Activated CD8-positive, alpha-beta memory T cell treated with anti-CD3 and anti-CD28 coated beads, Interleukin-2, amount 10 ng/mL, durations not matched to agents 7 days and 5 days (primary cell): ENCODE measurements at regions of chr10 and their contacts with region 1.

Region 1: DNA sequence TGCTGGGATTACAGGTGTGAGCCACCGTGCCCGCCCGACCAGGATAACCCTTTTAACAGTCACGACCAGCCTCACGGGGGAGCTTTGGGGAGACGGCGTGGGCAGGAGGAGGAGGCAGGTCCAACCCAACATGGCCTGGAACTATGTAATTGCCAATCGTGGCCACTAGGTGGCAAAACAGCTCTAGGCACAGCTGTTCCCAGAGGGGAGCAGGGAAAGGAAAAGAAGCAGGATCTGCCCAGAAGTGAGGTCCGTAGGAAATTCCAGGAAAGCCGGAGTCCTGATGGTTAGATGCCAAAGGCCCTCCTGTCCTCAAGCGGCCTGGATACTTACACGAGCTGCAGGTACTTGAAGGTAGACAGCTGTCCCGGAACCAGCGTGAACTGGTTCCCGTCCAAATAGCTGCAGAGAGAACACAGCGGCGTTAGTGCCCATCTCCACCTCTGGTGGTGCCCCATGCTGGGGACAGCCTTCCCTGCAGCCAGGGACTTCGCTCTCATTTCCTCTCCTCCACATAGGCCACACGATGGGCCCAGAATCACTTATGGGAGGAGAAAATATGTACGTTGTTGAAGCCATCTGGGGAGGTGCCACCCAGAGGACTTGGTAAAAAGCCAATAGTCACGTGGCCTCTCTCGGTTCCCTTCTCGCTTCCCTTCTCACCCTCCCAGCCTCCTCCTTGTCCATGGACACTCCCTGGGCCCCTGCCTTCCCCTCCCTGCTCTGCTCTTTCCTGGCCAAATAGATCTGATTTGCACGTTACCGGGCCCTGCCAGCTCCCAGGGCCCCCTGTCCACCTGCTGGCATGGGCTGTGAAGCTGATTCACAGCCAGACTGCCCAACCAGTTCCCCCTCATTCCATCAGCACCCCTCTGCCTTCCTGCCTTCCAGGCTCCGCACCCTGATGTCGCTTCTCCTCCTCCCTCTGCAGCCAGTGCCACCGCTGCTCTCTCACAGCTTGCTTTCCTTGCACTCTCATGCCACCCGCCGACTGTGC is 148.1 kb downstream of the SLIT1 start:
- DNase-seq: peak; percentile 79
- ATAC-seq: peak; percentile 90
- H3K4me3 Mint-ChIP-seq: peak overlapping the region; percentile 7
- H3K27ac Mint-ChIP-seq: no peak overlapping the region
- H3K4me1 Mint-ChIP-seq: peaks cover 6% of the 10 kb centered on the region
- H3K27me3 Mint-ChIP-seq: peaks cover 7% of the 10 kb centered on the region

Region 2: GRCh38 chr10:96910488-96911395 is 126.9 kb before region 1 on chr10:
- CTCF ChIA-PET with region 1: interaction called, 20 read pairs
- DNase-seq: no peak
- ATAC-seq: peak; percentile 42
- H3K4me3 Mint-ChIP-seq: no peak overlapping the region
- H3K27ac Mint-ChIP-seq: no peak overlapping the region
- H3K4me1 Mint-ChIP-seq: peaks cover 6% of the 10 kb centered on the region
- H3K27me3 Mint-ChIP-seq: no peaks in the 10 kb centered on the region

Region 3: DNA sequence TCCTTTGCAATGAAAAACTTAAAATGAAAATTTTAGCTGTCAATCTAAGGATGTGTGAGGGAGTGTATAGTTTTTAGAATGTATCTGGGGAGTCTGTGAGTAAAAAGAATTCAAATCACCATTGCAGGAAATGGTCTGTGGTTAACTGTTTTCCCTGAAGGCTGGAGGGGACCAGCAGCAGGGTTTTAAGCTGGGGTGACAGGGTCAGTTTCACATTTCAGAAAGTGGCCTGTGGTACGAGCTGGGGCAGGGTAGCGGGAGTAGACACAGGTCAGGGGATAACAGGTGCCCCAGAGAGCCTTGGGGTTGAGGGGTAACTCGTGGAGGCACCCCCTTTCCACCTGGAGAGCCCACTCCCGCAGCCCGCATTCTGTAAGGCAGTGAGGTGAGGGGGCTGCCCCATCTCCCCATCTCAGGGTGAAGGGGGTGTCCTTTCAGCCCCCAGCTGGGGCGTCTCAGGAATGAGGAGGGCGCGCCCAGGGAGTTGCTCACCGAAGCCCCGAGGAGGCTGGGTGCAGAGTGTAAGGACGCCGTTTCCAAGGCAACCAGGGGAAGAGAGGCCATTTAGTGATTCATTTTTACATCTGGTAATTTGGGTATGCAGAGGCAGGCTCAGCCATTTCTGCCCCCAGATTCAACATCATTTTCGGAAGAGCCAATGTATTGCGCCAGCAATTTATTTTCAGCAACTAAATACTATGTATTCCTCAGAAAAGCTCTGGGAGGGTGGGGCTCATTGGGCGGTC is 20.8 kb before region 1 on chr10:
- CTCF ChIA-PET with region 1: interaction called, 89 read pairs
- DNase-seq: peak; percentile 75
- ATAC-seq: peak; percentile 82
- H3K4me3 Mint-ChIP-seq: peak overlapping the region; percentile 59
- H3K27ac Mint-ChIP-seq: peak overlapping the region; percentile 84
- H3K4me1 Mint-ChIP-seq: peaks cover 35% of the 10 kb centered on the region
- H3K27me3 Mint-ChIP-seq: peaks cover 2% of the 10 kb centered on the region

Region 4: GRCh38 chr10:97025613-97026242 is 11.9 kb before region 1 on chr10:
- CTCF ChIA-PET with region 1: interaction called, 89 read pairs
- DNase-seq: peak; percentile 69
- ATAC-seq: peak; percentile 77
- H3K4me3 Mint-ChIP-seq: no peak overlapping the region
- H3K27ac Mint-ChIP-seq: no peak overlapping the region
- H3K4me1 Mint-ChIP-seq: peaks cover 16% of the 10 kb centered on the region
- H3K27me3 Mint-ChIP-seq: peaks cover 20% of the 10 kb centered on the region

Region 5: GRCh38 chr10:97196223-97197029 is 158.8 kb after region 1 on chr10:
- CTCF ChIA-PET with region 1: interaction called, 23 read pairs
- DNase-seq: peak; percentile 81
- ATAC-seq: peak; percentile 90
- H3K4me3 Mint-ChIP-seq: peak overlapping the region; percentile 56
- H3K27ac Mint-ChIP-seq: no peak overlapping the region
- H3K4me1 Mint-ChIP-seq: peaks cover 17% of the 10 kb centered on the region
- H3K27me3 Mint-ChIP-seq: peaks cover 48% of the 10 kb centered on the region

Region 6: GRCh38 chr10:97210543-97210961 is 172.9 kb after region 1 on chr10:
- CTCF ChIA-PET with region 1: interaction called, 56 read pairs
- DNase-seq: peak; percentile 77
- ATAC-seq: peak; percentile 77
- H3K4me3 Mint-ChIP-seq: no peak overlapping the region
- H3K27ac Mint-ChIP-seq: no peak overlapping the region
- H3K4me1 Mint-ChIP-seq: no peaks in the 10 kb centered on the region
- H3K27me3 Mint-ChIP-seq: no peaks in the 10 kb centered on the region

Region 7: DNA sequence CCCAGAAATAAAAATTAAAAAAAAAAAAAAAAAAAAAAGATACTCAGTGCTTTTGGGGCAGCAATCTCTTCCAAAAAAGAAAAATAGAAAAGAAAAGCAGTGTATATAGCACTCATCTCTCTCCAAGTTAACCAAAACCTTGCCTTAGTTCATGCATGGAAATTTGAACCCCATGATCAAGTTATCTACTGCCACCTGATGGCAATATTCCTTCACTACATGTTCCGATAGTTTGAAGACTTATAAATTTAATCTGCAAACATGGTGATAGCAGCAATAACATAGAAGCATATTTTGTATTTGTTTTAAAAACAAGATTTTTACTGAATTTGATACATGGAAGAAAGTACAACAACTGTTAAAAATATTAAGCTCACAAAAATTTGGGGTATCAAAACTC is 196.7 kb after region 1 on chr10:
- CTCF ChIA-PET with region 1: interaction called, 11 read pairs
- DNase-seq: no peak
- ATAC-seq: no peak
- H3K4me3 Mint-ChIP-seq: no peak overlapping the region
- H3K27ac Mint-ChIP-seq: no peak overlapping the region
- H3K4me1 Mint-ChIP-seq: peaks cover 14% of the 10 kb centered on the region
- H3K27me3 Mint-ChIP-seq: no peaks in the 10 kb centered on the region